Testis (tissue), 5 donors: ENCODE measurements at regions of chr11 and their contacts with region 1.

Region 1: DNA sequence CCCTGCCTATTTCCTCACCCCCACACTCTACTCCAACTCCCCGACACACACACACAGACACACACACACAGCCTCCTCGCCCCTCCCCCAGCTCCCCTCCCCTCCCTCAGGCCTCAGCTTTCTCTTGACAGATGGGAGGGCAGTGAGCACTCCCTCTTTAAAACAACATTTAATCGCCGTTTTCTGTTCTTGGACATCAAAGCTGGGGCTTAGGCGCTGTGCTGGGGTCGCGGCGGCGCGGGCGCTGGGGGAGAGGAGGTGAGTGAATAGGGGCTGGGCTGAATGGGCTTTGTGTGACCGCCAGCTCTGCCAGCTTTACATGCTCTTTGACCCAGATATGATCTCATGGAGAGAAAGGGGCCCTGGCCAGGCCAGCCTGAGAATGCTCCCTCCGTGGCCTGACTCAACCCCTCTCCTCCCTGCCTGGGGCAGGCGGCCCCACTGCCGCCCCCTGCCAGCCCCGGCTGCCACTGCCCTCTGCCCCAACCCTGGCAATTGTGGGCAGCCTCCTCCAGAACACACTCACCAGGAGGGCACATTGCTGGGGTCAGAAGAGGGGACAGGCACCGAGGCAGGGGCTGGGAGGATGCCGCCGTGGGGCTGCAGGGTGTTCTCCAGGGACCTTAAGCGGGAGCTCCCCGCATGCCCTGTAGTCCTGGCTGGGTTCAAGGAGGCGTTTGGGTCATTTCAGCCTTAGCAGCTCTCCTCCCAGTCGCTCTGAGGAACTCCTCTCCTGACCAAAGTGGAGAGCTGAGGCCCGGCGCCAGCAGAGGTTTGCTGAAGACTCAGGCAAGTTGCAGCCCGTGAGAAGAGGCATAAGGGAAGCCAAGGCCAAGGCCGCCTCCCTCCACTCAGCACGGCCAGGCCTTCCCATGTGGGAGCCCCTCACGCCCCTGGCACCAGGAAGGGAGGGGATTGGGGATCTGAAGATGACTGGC is 38.3 kb upstream of the NNMT start:
- DNase-seq: peak; percentile 78
- H3K4me3 ChIP-seq: no peak overlapping the region
- H3K27ac ChIP-seq: peak overlapping the region; percentile 75 to 77
- H3K4me1 ChIP-seq: peaks cover 36% of the 10 kb centered on the region
- H3K27me3 ChIP-seq: no peaks in the 10 kb centered on the region
- CTCF ChIP-seq: peak in 1 of 3 experiments; percentile 1
- POLR2A ChIP-seq: no peak

Region 2: DNA sequence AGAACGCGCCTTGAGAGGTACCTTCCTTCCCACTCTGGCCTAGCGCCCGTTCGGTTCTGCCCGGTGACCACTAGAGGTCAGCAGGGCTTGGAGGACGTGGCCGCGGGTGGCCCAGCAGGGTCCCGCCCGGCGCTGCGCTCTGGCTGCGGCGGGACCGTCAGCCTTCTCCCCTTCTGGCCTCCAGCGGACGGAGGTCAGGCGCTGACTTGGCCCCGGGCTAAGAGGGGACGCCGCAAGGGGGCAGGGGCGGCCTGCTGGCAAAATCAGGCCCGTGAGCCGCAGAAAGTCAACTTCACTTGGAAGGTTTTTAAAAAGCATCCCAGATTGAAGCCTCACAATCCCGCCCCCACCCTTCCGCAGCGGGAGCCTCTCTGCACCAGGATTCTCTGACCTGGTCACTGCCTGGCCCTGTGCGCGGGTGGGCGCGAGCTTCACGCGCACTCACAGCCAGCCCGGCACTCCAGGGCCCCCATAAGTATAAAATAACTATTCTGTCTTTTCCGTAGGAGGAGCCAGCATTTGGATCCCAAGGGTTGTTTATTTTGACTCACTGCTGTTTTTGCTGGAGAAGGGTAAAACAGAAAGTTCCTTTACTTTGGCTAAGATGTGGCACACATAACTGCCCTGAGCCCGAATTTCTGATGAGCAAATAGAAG is 221.6 kb before region 1 on chr11:
- intact Hi-C with region 1: loop called (anchors 5 kb)
- DNase-seq: peak; percentile 87
- H3K4me3 ChIP-seq: peak overlapping the region; percentile 43 to 58
- H3K27ac ChIP-seq: peak overlapping the region; percentile 59 to 82
- H3K4me1 ChIP-seq: peaks cover 11% of the 10 kb centered on the region
- H3K27me3 ChIP-seq: no peaks in the 10 kb centered on the region
- CTCF ChIP-seq: peak; percentile 84 to 93 (median 87)
- POLR2A ChIP-seq: no peak

Region 3: GRCh38 chr11:114059278-114059983 is 198.5 kb before region 1 on chr11 and contains the start of gene ZBTB16:
- intact Hi-C with region 1: loop called (anchors 1 kb)
- DNase-seq: peak; percentile 82
- H3K4me3 ChIP-seq: peak within 1 kb of the TSS; percentile 90 to 96
- H3K27ac ChIP-seq: peak within 1 kb of the TSS; percentile 92 to 99
- H3K4me1 ChIP-seq: peaks cover 22% of the 10 kb centered on the region
- H3K27me3 ChIP-seq: no peaks in the 10 kb centered on the region
- CTCF ChIP-seq: peak in 1 of 3 experiments; percentile 28
- POLR2A ChIP-seq: peak; percentile 34
- total RNA-seq, gene ZBTB16: 51.5 to 88.5 TPM

Region 4: GRCh38 chr11:114171257-114172054 is 86.4 kb before region 1 on chr11:
- intact Hi-C with region 1: no loop called
- DNase-seq: peak; percentile 87
- H3K4me3 ChIP-seq: no peak overlapping the region
- H3K27ac ChIP-seq: peak overlapping the region; percentile 98 to 99
- H3K4me1 ChIP-seq: peaks cover 83% of the 10 kb centered on the region
- H3K27me3 ChIP-seq: no peaks in the 10 kb centered on the region
- CTCF ChIP-seq: no peak
- POLR2A ChIP-seq: no peak

Region 5: DNA sequence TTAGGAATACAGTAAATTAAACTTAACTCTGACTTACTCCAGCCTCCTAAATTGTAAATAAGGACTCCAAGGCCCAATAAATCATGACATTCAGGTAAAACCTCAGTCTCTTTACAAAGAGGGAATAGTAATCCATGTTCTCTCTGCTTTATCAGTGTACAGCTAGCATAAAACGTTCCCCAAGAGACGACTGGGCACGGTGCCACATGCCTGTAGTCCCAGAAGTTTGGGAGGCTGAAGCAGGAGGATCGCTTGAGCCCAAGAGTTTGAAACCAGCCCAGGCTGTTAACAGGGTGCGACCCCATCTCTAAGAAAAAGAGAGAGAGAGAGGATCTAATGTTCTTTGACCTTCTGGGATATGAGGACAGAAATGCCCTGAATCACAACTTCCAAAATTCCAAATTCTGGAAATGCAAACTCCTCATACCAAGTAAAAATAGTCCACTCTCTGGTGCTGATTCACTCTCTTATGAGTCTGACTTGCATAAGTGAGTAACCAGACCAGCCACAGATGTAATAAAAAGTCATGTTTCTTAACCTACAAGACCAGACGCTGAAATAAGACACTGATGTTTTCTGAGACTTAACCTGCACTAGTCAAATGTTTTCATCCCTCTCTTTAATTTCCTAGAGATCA is 63.8 kb after region 1 on chr11:
- intact Hi-C with region 1: no loop called
- DNase-seq: peak; percentile 42
- H3K4me3 ChIP-seq: no peak overlapping the region
- H3K27ac ChIP-seq: peak overlapping the region in 1 of 2 donors; percentile 15
- H3K4me1 ChIP-seq: peaks cover 11% of the 10 kb centered on the region
- H3K27me3 ChIP-seq: no peaks in the 10 kb centered on the region
- CTCF ChIP-seq: no peak
- POLR2A ChIP-seq: no peak

Region 6: DNA sequence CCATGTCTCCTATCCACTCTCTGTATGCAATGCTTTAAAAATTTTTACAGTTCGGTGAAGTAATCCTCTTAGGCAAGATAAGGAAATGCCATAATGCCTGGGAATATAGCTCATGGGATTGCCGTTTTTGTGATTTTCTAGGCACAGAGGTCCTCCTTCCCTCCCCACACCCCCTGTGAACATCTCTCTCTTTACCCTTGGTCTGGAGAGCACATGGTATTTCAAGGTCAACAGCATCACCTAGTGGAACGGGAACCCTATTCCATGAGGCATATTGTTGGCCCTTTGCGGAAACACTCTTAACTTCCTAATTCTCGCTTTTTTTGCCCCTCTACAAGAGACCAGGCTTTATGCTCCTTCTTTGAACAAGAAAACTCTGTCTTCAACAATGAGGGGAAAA is 328.9 kb after region 1 on chr11:
- intact Hi-C with region 1: no loop called
- DNase-seq: no peak
- H3K4me3 ChIP-seq: no peak overlapping the region
- H3K27ac ChIP-seq: no peak overlapping the region
- H3K4me1 ChIP-seq: no peaks in the 10 kb centered on the region
- H3K27me3 ChIP-seq: no peaks in the 10 kb centered on the region
- CTCF ChIP-seq: no peak
- POLR2A ChIP-seq: no peak